Activated CD8-positive, alpha-beta memory T cell treated with anti-CD3 and anti-CD28 coated beads, Interleukin-2, amount 10 ng/mL, durations not matched to agents 7 days and 5 days (primary cell): ENCODE measurements at regions of chr21 and their contacts with region 1.

Region 1: GRCh38 chr21:33924079-33924765 is 8.6 kb upstream of the ATP5PO start:
- DNase-seq: peak; percentile 92
- ATAC-seq: peak; percentile 96
- H3K4me3 Mint-ChIP-seq: no peak overlapping the region
- H3K27ac Mint-ChIP-seq: peak overlapping the region; percentile 28
- H3K4me1 Mint-ChIP-seq: peaks cover 21% of the 10 kb centered on the region
- H3K27me3 Mint-ChIP-seq: no peaks in the 10 kb centered on the region

Region 2: GRCh38 chr21:33619726-33620125 is 304.5 kb before region 1 on chr21:
- CTCF ChIA-PET with region 1: no interaction called
- DNase-seq: no peak
- ATAC-seq: no peak
- H3K4me3 Mint-ChIP-seq: no peak overlapping the region
- H3K27ac Mint-ChIP-seq: no peak overlapping the region
- H3K4me1 Mint-ChIP-seq: no peaks in the 10 kb centered on the region
- H3K27me3 Mint-ChIP-seq: no peaks in the 10 kb centered on the region

Region 3: DNA sequence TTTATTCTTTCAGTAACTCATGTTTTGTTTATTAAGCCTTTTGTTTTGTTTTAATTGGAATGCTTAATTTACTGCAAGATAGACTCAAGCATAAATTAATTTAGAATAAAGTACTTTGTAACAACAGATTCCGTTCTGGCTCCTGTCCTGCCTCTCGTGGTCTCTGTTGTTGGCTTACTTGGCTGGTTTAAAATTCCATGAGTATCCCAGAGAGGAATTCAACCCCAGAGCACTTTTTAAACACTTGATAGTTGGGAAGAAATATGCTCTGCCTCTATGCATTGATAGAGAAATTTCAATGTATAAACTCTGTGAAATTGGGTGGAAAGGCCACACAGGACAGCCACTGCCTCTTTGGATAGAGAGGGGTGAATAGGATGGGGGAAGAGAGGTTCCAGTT is 98.3 kb before region 1 on chr21:
- CTCF ChIA-PET with region 1: no interaction called
- DNase-seq: no peak
- ATAC-seq: no peak
- H3K4me3 Mint-ChIP-seq: no peak overlapping the region
- H3K27ac Mint-ChIP-seq: no peak overlapping the region
- H3K4me1 Mint-ChIP-seq: no peaks in the 10 kb centered on the region
- H3K27me3 Mint-ChIP-seq: no peaks in the 10 kb centered on the region

Region 4: DNA sequence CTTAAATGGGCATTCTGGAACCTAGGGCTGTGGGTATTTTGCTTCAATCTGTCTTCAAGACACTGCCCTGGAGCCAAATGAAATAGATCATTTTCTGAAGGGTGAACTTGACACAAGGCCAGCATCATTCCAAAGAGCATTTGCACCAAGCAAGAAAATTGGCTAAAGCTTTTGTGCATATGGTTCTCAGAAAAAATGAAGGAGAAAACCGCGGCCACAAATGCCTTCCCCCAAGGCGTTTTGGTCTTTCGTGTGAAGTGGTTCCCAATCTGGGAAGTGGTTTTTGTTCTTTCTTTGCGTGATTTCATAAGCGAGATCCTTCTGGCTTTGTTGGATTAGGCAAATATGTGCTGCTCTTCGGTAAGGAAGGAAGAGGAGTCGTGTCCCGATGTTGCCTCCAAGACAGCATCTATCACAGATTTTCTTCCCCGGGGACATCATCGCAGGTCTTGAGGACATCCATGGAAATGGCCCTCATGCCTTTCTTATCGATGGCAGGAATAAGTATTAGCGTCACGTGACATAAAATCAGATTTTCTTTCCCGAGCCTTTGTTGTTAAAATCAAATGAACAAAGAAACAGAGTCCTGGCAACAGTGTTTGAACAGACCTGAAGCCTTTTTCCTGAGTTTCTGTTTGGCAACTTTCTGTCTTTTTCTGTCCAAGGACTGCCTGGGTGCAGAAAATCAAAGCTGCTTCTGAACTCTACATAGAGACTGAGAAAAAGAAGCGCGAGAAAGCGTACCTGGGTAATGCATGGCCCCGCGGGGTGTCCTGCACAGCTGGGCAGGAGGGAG is 39.6 kb before region 1 on chr21:
- CTCF ChIA-PET with region 1: no interaction called
- DNase-seq: no peak
- ATAC-seq: no peak
- H3K4me3 Mint-ChIP-seq: no peak overlapping the region
- H3K27ac Mint-ChIP-seq: no peak overlapping the region
- H3K4me1 Mint-ChIP-seq: peaks cover 5% of the 10 kb centered on the region
- H3K27me3 Mint-ChIP-seq: peaks cover 17% of the 10 kb centered on the region

Region 5: DNA sequence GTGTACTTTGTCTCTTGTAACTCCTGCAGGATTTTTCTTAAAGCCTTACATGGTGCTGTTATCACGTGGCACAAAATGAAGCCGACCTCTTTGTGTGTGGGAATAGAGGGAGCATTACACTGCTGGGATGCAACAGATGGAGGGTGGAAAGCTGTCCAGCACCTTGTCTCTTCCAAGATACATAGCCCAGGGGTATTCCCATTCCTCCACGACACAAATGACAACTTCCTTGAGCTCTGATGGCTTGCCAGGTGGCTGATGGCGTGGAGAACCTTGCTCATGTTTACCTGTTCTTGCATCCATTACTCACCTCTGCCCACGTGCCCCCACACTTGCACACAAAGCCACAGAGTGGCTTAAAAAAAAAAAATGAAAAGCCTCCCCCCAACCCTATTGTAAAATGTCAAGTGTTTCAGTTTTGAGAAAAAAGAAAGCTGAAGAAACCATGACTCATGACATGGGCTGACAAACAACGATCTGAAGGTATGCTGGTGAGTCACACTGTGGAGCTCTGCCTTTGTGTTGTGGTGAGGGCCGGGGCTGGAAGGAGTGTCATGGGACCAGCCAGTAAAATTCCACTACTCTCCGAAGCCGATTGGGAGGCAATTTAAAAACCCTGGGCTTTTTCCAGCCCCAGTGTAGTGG is 23.4 kb after region 1 on chr21:
- CTCF ChIA-PET with region 1: interaction called, 28 read pairs
- DNase-seq: peak; percentile 93
- ATAC-seq: peak; percentile 68
- H3K4me3 Mint-ChIP-seq: peak overlapping the region; percentile 67
- H3K27ac Mint-ChIP-seq: peak overlapping the region; percentile 98
- H3K4me1 Mint-ChIP-seq: peaks cover 77% of the 10 kb centered on the region
- H3K27me3 Mint-ChIP-seq: no peaks in the 10 kb centered on the region

Region 6: DNA sequence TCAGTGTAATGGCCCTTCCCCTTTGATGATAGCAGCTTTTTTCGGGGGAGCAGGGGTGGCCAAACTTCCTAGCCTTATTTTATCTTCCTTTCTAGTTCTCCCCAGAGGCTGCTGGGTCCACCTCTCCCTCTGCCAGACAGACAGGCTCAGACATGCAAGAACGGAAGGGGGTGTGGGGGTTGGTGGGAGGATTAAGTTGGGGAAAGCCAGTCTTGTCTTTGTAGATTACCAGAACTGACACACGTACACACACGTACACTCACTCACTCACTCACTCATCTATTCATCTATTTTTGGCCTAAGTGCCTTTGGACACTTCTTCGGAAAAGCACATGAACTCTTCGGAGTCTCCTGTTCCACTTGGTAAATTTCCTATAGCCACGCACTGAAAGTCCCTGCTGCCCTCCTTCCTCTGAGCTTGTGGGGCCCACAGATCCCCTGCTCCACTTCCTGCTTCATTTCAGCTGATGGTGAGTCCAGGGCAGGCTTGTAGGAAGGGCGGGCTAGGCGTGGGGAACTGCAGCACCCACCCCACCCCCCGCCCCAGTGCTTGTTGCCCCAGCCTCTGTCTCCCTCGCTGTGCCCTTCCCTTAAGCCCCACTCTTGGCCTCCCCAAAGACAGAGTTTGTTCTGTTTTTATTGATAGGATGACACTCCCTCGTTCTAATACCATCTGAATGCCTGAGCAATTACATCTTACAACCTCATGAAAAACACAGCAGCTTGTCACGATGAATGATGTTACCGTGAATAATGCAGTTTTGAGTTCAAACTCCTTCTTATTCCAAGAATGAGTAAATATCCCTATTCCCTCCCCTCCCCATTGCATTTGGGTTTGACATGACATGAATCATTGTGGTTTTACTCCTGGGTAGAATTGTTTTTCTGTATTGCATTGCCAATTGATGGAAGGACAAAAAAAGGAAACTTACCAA is 52.1 kb after region 1 on chr21:
- CTCF ChIA-PET with region 1: interaction called, 23 read pairs
- DNase-seq: peak; percentile 72
- ATAC-seq: peak; percentile 49
- H3K4me3 Mint-ChIP-seq: peak overlapping the region; percentile 69
- H3K27ac Mint-ChIP-seq: peak overlapping the region; percentile 97
- H3K4me1 Mint-ChIP-seq: peaks cover 86% of the 10 kb centered on the region
- H3K27me3 Mint-ChIP-seq: no peaks in the 10 kb centered on the region

Region 7: GRCh38 chr21:34073032-34073869 is 149.0 kb after region 1 on chr21 and contains the starts of genes MRPS6 and SLC5A3:
- CTCF ChIA-PET with region 1: interaction called, 39 read pairs
- DNase-seq: peak; percentile 79
- ATAC-seq: peak; percentile 80
- H3K4me3 Mint-ChIP-seq: peak within 1 kb of the TSS; percentile 90
- H3K27ac Mint-ChIP-seq: peak within 1 kb of the TSS; percentile 72
- H3K4me1 Mint-ChIP-seq: peaks cover 38% of the 10 kb centered on the region
- H3K27me3 Mint-ChIP-seq: peaks cover 5% of the 10 kb centered on the region
- total RNA-seq, gene MRPS6: 82.9 to 124 TPM
- total RNA-seq, gene SLC5A3: 29.2 to 34.7 TPM

Region 8: DNA sequence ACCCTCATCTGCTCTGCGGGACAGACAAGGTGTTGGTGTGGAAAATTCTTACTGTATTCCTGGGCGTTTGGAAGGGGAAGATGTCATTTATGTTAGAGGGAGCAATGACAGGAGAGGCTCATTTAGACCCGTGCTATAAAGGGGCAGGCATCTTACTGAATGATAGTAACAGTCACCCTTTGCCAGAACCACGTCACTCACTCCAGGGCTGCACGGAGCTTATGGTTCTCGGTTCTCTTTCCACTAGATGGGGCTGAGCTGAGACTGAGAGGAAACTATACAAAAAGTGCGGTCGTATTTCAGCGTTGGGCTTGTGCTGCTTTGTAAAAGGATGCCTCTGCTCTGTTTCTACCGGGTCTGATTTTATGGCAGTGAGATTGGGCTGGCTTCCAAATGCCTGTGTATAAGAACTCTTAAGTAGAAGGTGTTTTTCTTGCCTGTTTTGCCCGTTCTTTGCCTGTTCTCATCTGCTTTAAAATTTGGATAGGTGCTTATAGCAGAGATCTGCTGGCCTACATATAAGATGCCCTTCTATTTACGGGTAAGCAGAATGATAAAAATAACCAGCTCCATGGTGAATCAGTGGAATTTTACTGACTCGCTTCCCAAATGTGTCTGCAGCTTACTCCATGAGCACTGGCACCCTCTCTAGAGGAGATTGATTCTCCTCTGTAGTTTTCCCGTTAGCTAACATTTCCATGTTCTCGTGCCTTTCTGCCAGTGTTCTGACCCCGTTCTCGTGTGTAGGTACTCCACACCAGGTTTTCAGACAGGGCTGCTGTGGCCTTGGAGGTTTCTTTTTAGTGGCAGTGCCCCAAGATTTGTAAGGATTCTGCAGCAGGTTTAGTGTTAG is 205.0 kb after region 1 on chr21:
- CTCF ChIA-PET with region 1: interaction called, 18 read pairs
- DNase-seq: peak; percentile 83
- ATAC-seq: peak; percentile 97
- H3K4me3 Mint-ChIP-seq: peak overlapping the region; percentile 38
- H3K27ac Mint-ChIP-seq: peak overlapping the region; percentile 76
- H3K4me1 Mint-ChIP-seq: peaks cover 59% of the 10 kb centered on the region
- H3K27me3 Mint-ChIP-seq: no peaks in the 10 kb centered on the region

Region 9: GRCh38 chr21:34198231-34199120 is 274.3 kb after region 1 on chr21:
- CTCF ChIA-PET with region 1: interaction called, 10 read pairs
- DNase-seq: peak; percentile 81
- ATAC-seq: peak; percentile 84
- H3K4me3 Mint-ChIP-seq: peak overlapping the region; percentile 1
- H3K27ac Mint-ChIP-seq: peak overlapping the region; percentile 88
- H3K4me1 Mint-ChIP-seq: peaks cover 48% of the 10 kb centered on the region
- H3K27me3 Mint-ChIP-seq: no peaks in the 10 kb centered on the region